AG04449 (cell line): ENCODE measurements at regions of chr7 and their contacts with region 1.

Region 1: GRCh38 chr7:100221231-100221718 is 1.5 kb downstream of the PVRIG start:
- DNase-seq: no peak
- H3K4me3 ChIP-seq: no peak overlapping the region
- CTCF ChIP-seq: no peak

Region 2: DNA sequence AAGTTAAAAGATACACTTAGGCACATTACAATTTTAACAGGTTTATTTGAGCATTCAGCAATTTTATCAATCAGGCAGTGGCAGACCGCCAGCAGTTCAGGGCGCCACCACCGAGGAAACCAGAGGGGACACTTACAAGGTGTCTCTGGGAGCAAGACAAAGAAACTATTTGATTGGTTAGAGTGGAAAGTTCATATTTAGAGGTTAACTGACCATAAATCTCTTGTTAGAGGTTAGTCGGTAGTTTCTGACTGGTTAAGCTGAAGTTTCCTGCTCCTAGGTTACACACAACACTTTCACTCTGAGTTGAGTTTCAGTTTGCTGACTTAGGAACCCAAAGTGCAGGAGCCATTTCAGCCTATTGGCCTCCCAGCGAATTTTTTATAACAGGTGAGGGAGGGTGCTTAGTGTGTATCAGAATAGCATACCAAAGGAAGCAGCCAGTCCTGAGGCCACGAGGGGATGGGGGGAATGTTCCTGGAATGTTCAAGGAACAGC is 12.3 kb before region 1 on chr7:
- CTCF ChIA-PET with region 1: interaction called, 15 read pairs
- POLR2A ChIA-PET with region 1: no interaction called
- DNase-seq: no peak
- H3K4me3 ChIP-seq: no peak overlapping the region
- CTCF ChIP-seq: no peak

Region 3: DNA sequence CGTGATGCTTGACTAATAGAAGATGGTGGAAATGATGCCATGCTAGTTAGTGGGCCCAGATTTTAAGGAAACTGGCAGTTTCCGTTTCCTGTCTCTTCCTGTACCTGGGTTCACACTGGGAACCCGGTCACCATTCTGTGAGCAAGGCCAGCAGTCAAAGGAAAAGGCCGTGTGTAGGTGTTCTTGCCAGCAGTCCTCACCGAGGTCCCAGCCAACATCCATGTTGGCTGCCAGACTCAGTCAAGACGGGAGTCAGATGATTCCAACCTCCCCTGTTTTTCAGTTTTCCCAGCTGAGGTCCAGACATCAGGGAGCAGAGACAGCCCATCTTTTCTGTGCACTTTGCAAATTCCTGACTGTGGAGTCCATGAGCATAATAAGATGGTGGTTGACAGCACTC is 121.5 kb after region 1 on chr7:
- CTCF ChIA-PET with region 1: interaction called, 38 read pairs
- POLR2A ChIA-PET with region 1: no interaction called
- DNase-seq: no peak
- H3K4me3 ChIP-seq: no peak overlapping the region
- CTCF ChIP-seq: no peak